ENCODE measurements at regions of chr9 and their contacts with region 1.

Region 1: DNA sequence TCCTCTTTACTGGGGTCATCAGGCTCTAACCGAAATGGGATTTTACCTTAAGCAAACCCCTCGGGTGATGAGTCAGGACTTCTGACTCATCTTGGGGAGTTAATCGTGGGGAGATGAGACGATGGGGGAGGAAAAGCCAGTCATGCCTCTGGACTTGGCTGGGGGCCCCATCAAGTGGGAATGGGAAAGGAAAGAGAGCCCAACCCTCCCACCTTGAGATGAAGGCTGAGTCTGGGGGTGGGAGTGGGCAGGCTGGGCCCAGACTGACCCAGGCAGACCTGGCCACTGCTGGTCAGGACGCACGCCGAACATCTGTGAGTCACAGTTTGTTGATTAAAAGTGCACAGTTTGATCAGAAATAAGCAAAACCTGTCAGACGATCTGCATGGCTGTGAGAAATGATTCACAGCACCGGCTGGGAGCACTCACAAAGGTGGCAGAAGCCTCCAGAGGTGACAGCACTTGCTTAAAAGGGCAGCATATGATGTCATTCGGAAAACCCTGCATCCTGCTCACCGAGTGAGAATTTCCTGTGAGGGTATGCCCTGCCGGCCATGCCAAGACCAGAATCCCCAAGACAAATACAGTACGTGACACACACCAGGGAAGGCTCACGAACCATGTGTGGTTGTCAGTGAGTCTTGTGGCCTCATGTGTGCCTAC is 50.0 kb upstream of the SLC25A51 start:
- DNase-seq: no peak
- ATAC-seq: peak; percentile 36

Region 2: DNA sequence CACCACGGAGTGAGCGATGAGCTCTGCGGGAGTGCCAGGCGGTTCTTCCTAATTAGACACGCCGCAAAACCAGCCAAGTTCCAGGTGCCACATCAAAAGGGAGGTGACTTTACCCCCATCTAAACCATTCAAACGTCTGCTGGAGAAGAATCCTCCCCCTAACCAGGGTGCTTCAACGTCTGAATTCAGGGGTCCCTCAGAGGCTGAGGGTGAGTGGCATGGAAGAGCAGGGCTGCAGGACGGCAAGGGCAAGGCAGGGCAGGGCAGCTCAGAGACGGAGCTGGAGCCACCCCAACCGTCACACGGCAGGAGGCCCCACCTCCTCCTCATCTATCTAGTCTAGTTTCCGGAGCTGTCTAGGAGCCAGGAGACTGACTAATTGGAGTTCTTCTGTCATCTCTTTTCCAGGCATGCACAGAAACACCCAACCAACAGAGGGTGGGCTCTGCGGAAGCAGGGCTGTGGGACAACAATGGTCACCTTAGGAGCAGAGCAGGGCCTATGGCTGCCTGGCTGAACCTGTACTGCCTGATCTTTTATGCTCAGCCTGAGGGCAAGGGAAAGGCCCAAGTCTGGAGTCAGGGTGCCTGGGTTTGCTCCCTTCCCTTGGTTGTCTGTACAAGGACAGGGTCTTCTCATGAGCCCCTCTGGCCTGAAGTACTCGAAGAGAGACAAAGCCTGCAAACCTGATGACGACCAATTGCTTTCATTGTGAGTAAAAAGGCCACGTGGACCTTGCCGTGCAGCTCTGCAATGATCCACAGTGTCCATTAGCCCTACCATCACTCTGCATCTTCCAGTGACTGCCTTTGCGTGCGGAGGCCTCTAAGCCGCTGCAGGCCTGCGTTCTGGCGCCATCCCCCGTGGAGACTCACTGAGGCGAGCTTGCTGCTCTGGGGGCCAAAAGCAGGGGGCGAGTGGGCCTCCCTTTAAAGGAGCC is 31.0 kb after region 1 on chr9:
- intact Hi-C with region 1: loop called (anchors 5 kb)
- DNase-seq: peak; percentile 70
- ATAC-seq: peak; percentile 86

Region 3: DNA sequence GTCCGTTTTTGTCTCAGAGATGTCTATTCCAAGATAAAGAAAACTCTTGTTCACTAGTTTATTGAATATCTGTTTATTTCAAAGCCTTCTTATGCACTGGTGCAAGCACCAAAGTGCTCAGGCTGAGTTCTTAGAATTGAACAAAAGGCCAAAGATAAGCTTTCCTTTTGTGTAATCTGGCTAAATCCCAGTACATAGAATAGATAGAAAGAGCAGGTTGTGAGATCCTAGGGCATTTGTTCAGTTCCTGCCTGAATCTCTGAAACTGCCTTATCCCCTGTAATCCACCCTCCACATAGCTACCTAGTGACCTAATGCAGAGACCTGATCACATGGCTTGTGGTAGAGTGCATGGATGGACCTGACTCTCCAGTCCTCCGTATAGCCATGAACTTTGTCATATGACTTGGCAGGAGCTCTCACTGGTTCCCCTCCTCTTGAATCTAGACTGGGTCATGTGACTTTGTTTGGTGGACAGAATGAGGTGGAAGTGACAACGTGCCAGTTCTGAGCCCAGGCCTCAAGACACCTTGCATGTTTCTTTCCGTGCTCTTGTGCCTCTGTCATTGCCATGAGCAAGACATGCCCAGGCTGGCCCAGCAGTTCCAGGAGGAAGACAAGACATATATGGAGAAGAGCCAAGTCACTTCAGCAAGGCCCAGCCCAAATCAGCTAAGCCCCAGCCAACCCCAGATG is 254.4 kb after region 1 on chr9:
- intact Hi-C with region 1: no loop called
- DNase-seq: no peak
- ATAC-seq: no peak

Measured in left ventricle myocardium superior (tissue), 1 donor.